Right lobe of liver (tissue), 6 donors: ENCODE measurements at regions of chr9 and their contacts with region 1.

Region 1: DNA sequence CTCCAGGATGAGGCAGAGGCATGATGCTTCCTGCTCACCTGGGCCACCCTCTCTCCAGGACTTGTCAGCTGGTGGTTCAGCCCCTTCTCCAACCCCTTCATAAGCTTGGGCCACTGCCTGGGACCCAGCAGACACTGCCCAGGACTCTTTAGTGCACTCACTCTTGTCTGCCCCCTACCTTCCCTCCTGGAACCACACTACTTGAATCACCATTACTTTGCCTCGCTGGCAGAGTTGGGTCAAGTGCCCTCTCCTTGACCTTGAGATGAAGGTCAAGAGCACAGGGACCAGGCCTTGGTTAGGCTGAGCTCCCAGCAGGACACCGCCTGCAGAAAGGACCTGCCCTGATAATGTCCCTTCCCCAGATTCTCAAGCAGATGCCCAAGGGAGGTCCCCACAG is 8.5 kb upstream of the ENDOG start:
- DNase-seq: no peak
- ATAC-seq: peak in 2 of 4 donors; percentile 25 to 26
- H3K4me3 ChIP-seq: no peak overlapping the region
- H3K27ac ChIP-seq: no peak overlapping the region
- H3K4me1 ChIP-seq: no peaks in the 10 kb centered on the region
- H3K27me3 ChIP-seq: no peaks in the 10 kb centered on the region
- CTCF ChIP-seq: no peak
- POLR2A ChIP-seq: no peak

Region 2: DNA sequence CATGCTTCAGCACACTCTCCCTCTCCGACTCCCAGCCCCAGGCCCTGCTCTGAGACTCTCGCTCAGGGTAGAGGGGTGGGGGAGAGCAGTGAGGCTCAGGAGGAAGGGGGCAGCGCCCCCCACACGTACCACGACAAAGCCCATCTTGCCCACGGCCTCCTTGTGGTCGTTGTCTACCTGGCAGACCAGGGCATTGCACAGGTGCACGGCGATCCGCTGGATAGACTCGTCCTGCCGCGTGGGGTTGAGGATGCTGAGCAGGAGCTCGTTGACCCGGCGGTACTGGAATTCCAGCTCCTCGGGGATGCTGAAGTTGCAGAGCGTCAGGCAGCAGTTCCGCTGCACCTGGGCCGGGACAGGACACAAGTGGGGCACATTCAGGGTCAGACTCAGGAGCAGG is 67.4 kb before region 1 on chr9:
- intact Hi-C with region 1: loop called in 1 of 2 experiments (anchors 10 kb)
- DNase-seq: no peak
- ATAC-seq: peak in 2 of 4 donors; percentile 13 to 16
- H3K4me3 ChIP-seq: no peak overlapping the region
- H3K27ac ChIP-seq: no peak overlapping the region
- H3K4me1 ChIP-seq: no peaks in the 10 kb centered on the region
- H3K27me3 ChIP-seq: no peaks in the 10 kb centered on the region
- CTCF ChIP-seq: no peak
- POLR2A ChIP-seq: no peak